AG04449 (cell line): ENCODE measurements at regions of chr18 and their contacts with region 1.

Region 1: GRCh38 chr18:58117786-58118403 is 73.9 kb downstream of the NEDD4L start:
- DNase-seq: peak; percentile 26
- H3K4me3 ChIP-seq: no peak overlapping the region
- CTCF ChIP-seq: no peak

Region 2: DNA sequence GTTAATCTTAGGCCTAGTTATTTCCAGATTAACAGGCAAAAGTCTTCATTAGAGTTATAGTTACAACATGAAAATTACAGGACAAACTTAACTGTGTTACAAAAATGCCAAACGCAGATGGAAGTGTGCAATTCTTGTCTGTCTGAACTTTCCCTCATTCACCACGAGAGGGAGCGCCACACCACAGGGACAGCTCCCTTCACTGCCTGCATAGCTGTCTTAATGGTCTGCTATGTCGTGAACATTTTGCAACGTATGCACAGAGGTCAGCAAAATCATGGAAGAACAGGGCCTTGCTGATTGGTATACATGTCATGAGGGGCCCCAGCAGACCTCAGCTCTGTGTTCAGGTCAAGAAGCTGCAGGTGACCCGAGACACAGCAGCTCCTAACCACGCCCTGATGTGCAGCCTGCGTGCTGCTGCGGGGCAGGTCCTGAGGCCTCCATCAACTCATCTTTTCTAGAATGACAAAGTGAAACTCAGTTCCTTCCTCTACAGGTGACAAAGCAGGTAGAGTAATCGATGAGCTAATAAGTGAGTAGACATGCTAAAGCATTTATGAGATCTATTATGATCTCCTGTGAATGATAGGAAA is 236.0 kb before region 1 on chr18:
- CTCF ChIA-PET with region 1: interaction called, 46 read pairs
- POLR2A ChIA-PET with region 1: no interaction called
- DNase-seq: peak; percentile 38
- H3K4me3 ChIP-seq: no peak overlapping the region
- CTCF ChIP-seq: peak; percentile 95

Region 3: GRCh38 chr18:57898506-57899124 is 219.3 kb before region 1 on chr18:
- CTCF ChIA-PET with region 1: interaction called, 11 read pairs
- POLR2A ChIA-PET with region 1: no interaction called
- DNase-seq: peak; percentile 88
- H3K4me3 ChIP-seq: no peak overlapping the region
- CTCF ChIP-seq: no peak

Region 4: DNA sequence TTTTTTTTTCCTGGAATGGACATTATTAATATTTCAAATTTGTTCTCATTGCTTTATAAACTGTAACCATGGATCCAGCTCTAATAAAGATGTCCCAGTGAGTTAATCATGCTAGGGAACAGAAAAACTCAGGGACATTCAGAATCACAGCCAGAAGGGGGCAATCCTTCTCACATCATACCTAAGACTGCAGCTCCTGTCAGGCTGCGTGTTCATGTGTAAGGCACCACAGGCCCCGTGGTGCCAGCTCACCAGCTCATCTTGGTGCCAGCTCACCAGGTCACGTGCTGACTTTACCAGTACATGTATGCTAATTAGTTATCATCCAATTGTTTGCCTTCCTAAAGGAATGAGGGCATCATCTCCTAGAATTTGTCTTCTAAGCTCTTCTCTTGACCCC is 158.6 kb before region 1 on chr18:
- CTCF ChIA-PET with region 1: interaction called, 26 read pairs
- POLR2A ChIA-PET with region 1: no interaction called
- DNase-seq: no peak
- H3K4me3 ChIP-seq: no peak overlapping the region
- CTCF ChIP-seq: peak; percentile 41

Region 5: GRCh38 chr18:58043491-58044379 is 74.2 kb before region 1 on chr18 and contains the start of gene NEDD4L:
- CTCF ChIA-PET with region 1: interaction called, 43 read pairs
- POLR2A ChIA-PET with region 1: interaction called, 3 read pairs
- DNase-seq: no peak
- H3K4me3 ChIP-seq: peak within 1 kb of the TSS; percentile 73
- CTCF ChIP-seq: peak; percentile 93

Region 6: GRCh38 chr18:58051765-58052460 is 66.0 kb before region 1 on chr18:
- CTCF ChIA-PET with region 1: interaction called, 30 read pairs
- POLR2A ChIA-PET with region 1: interaction called, 4 read pairs
- DNase-seq: no peak
- H3K4me3 ChIP-seq: no peak overlapping the region
- CTCF ChIP-seq: peak; percentile 7

Region 7: GRCh38 chr18:58105888-58106260 is 12.0 kb before region 1 on chr18:
- CTCF ChIA-PET with region 1: interaction called, 26 read pairs
- POLR2A ChIA-PET with region 1: no interaction called
- DNase-seq: no peak
- H3K4me3 ChIP-seq: no peak overlapping the region
- CTCF ChIP-seq: no peak